B cell (primary cell): ENCODE measurements at regions of chr1 and their contacts with region 1.

Region 1: GRCh38 chr1:169893494-169894362 is at the start of gene SCYL3:
- DNase-seq: peak; percentile 99
- ATAC-seq: peak; percentile 88
- H3K4me3 ChIP-seq: peak within 1 kb of the TSS; percentile 81 to 96 (median 85)
- H3K4me3 Mint-ChIP-seq: peak within 1 kb of the TSS; percentile 98
- H3K27ac ChIP-seq: peak within 1 kb of the TSS; percentile 97
- H3K27ac Mint-ChIP-seq: peak within 1 kb of the TSS; percentile 100
- H3K4me1 ChIP-seq: peaks cover 25 to 32% of the 10 kb centered on the region in 2 donors
- H3K4me1 Mint-ChIP-seq: peaks cover 44% of the 10 kb centered on the region
- H3K27me3 ChIP-seq: peaks cover 0 to 3% (median under 1%) of the 10 kb centered on the region in 4 experiments
- H3K27me3 Mint-ChIP-seq: peaks cover 15% of the 10 kb centered on the region
- CTCF ChIP-seq: no peak
- total RNA-seq, gene SCYL3: 17.6 and 18.4 TPM in 2 replicates

Region 2: GRCh38 chr1:169879034-169879840 is 14.5 kb before region 1 on chr1:
- CTCF ChIA-PET with region 1: no interaction called
- POLR2A ChIA-PET with region 1: no interaction called
- intact Hi-C with region 1: no loop called
- DNase-seq: peak; percentile 14
- ATAC-seq: no peak
- H3K4me3 ChIP-seq: no peak overlapping the region
- H3K4me3 Mint-ChIP-seq: peak overlapping the region; percentile 36
- H3K27ac ChIP-seq: peak overlapping the region; percentile 26 to 78
- H3K27ac Mint-ChIP-seq: peak overlapping the region; percentile 79
- H3K4me1 ChIP-seq: peaks cover 16 to 27% of the 10 kb centered on the region in 2 donors
- H3K4me1 Mint-ChIP-seq: peaks cover 38% of the 10 kb centered on the region
- H3K27me3 ChIP-seq: no peaks in the 10 kb centered on the region
- H3K27me3 Mint-ChIP-seq: no peaks in the 10 kb centered on the region
- CTCF ChIP-seq: no peak

Region 3: DNA sequence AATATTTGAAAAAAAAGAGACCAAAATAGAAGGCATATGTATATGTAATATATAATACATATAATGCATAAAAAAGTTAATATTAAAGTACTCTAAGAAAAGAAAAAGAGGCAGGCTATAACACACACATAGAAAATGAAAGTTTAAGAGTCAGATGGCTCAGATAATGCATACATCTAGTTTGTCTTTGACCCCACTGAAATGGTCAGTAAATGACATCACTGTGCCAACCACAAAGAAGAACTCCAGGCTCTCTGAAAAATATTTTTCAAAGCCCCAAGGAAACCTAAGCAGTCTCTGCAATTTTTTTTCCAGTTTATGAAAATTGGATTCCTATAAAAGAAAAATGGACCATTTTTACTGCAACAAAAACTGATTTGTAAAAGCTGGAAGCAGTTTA is 55.4 kb after region 1 on chr1:
- CTCF ChIA-PET with region 1: no interaction called
- POLR2A ChIA-PET with region 1: no interaction called
- intact Hi-C with region 1: no loop called
- DNase-seq: no peak
- ATAC-seq: no peak
- H3K4me3 ChIP-seq: no peak overlapping the region
- H3K4me3 Mint-ChIP-seq: no peak overlapping the region
- H3K27ac ChIP-seq: no peak overlapping the region
- H3K27ac Mint-ChIP-seq: no peak overlapping the region
- H3K4me1 ChIP-seq: no peaks in the 10 kb centered on the region
- H3K4me1 Mint-ChIP-seq: no peaks in the 10 kb centered on the region
- H3K27me3 ChIP-seq: no peaks in the 10 kb centered on the region
- H3K27me3 Mint-ChIP-seq: no peaks in the 10 kb centered on the region
- CTCF ChIP-seq: no peak

Region 4: DNA sequence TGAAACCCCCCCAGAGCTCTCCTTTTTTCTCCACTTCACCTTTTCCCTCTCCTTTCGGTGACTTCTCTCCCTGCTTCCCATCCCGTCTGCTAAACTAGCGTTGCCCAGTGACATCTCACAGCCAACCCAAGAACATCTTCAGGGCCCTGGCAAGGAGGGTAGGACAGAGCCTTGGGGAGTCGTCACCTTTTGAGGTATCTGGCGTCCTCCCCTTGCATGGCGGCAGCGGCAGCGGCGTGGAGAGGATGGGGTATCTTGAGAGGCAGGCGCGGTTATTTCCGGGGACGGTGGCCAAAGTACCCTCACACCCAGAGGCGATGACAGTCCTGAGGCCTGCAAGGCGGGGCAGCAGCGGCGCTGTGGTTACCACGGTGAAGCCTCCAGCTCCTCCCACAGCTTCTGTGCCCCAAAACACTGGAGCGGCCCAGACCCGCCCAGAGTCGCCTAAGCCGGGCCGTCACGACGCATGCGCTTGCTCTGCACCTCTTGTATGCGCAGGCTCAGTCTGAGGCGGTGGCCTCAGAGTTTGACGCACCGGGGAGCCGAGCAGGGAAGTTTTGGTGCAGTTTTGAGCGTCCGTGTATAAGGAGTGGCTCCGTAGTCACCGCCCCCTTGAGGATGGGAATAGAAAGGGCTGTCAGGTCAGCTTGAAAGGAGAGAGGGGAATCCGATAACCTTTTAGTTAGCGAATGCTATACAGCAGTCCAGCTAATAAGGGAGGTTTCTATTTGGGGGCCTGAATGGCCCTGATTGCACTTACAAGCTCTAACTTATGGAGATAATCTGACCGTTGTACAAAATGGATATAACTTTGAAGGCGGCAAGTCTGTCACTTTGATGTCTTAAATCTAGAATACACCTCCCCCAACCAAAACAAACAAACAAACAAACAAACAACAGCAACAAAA is 180.8 kb after region 1 on chr1 and contains the start of gene KIFAP3:
- CTCF ChIA-PET with region 1: interaction called, 4 read pairs
- POLR2A ChIA-PET with region 1: interaction called, 7 read pairs
- intact Hi-C with region 1: loop called (anchors 2 kb)
- DNase-seq: peak; percentile 98
- ATAC-seq: peak; percentile 93
- H3K4me3 ChIP-seq: peak within 1 kb of the TSS; percentile 43 to 78 (median 66)
- H3K4me3 Mint-ChIP-seq: peak within 1 kb of the TSS; percentile 92
- H3K27ac ChIP-seq: peak within 1 kb of the TSS; percentile 63 to 84
- H3K27ac Mint-ChIP-seq: peak within 1 kb of the TSS; percentile 95
- H3K4me1 ChIP-seq: peaks cover 19 to 20% of the 10 kb centered on the region in 2 donors
- H3K4me1 Mint-ChIP-seq: peaks cover 44% of the 10 kb centered on the region
- H3K27me3 ChIP-seq: no peaks in the 10 kb centered on the region
- H3K27me3 Mint-ChIP-seq: peaks cover 11% of the 10 kb centered on the region
- CTCF ChIP-seq: peak; percentile 52
- total RNA-seq, gene KIFAP3: 14.1 and 14.9 TPM in 2 replicates

Region 5: GRCh38 chr1:170531758-170532657 is 638.3 kb after region 1 on chr1 and contains the start of gene GORAB:
- CTCF ChIA-PET with region 1: no interaction called
- POLR2A ChIA-PET with region 1: interaction called, 3 read pairs
- intact Hi-C with region 1: loop called (anchors 1 kb)
- DNase-seq: peak; percentile 91
- ATAC-seq: peak; percentile 97
- H3K4me3 ChIP-seq: peak within 1 kb of the TSS; percentile 72 to 95 (median 89)
- H3K4me3 Mint-ChIP-seq: no peak within 1 kb of the TSS
- H3K27ac ChIP-seq: peak within 1 kb of the TSS; percentile 82 to 92
- H3K27ac Mint-ChIP-seq: no peak within 1 kb of the TSS
- H3K4me1 ChIP-seq: peaks cover 12 to 17% of the 10 kb centered on the region in 2 donors
- H3K4me1 Mint-ChIP-seq: peaks cover 13% of the 10 kb centered on the region
- H3K27me3 ChIP-seq: no peaks in the 10 kb centered on the region
- H3K27me3 Mint-ChIP-seq: no peaks in the 10 kb centered on the region
- CTCF ChIP-seq: no peak
- total RNA-seq, gene GORAB: 24.2 and 32.5 TPM in 2 replicates

Region 6: GRCh38 chr1:171741872-171742576 is 1848.3 kb after region 1 on chr1 and contains the start of gene VAMP4:
- CTCF ChIA-PET with region 1: no interaction called
- POLR2A ChIA-PET with region 1: no interaction called
- intact Hi-C with region 1: loop called (anchors 2 kb)
- DNase-seq: peak; percentile 92
- ATAC-seq: peak; percentile 90
- H3K4me3 ChIP-seq: peak within 1 kb of the TSS; percentile 69 to 95 (median 93)
- H3K4me3 Mint-ChIP-seq: peak within 1 kb of the TSS; percentile 100
- H3K27ac ChIP-seq: peak within 1 kb of the TSS; percentile 91
- H3K27ac Mint-ChIP-seq: peak within 1 kb of the TSS; percentile 100
- H3K4me1 ChIP-seq: peaks cover 20 to 23% of the 10 kb centered on the region in 2 donors
- H3K4me1 Mint-ChIP-seq: peaks cover 40% of the 10 kb centered on the region
- H3K27me3 ChIP-seq: no peaks in the 10 kb centered on the region
- H3K27me3 Mint-ChIP-seq: no peaks in the 10 kb centered on the region
- CTCF ChIP-seq: no peak
- total RNA-seq, gene VAMP4: 17.5 and 21.8 TPM in 2 replicates